Activated B cell treated with CpG ODN at 0.5 μM for 24 hours (primary cell): ENCODE measurements at regions of chr22 and their contacts with region 1.

Region 1: DNA sequence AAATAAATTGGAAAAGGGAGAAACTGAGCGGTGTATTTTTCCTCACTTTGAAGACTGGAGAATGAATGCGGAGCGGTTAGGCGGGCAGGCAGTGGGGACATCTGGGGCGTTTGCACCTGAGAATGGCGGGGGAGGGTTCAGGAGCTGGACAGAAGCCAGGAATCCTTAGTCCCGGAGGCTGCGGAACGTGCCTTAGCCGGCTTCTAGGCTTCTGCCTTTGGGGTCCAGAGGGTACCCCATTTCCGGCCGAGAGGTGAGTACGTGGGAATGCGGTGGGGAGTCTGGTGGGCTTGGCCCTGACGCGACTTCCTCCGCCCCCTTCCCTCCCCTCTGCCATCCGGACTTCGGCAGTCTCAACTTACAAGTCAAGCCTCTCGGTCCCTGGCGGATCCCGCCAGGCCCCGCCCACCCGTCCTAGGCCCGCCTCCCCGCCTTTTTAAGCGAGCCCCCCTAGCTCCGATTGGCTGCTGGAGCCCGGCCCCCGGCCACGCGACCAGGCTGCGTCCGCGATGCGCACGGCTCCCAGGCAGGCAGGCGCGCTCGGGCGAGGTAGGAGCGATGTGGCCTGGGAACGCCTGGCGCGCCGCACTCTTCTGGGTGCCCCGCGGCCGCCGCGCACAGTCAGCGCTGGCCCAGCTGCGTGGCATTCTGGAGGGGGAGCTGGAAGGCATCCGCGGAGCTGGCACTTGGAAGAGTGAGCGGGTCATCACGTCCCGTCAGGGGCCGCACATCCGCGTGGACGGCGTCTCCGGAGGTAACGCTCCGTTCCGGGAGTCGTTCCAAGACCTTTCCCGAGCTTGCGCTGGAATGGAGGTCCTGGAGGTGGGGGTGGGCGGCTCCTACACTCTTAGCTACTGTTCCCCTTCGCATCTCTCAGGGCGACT is at the start of gene GCAT:
- DNase-seq: peak; percentile 73
- ATAC-seq: peak; percentile 98
- H3K4me3 Mint-ChIP-seq: peak within 1 kb of the TSS; percentile 70
- H3K27ac Mint-ChIP-seq: no peak within 1 kb of the TSS
- H3K4me1 Mint-ChIP-seq: peaks cover 43% of the 10 kb centered on the region
- H3K27me3 Mint-ChIP-seq: peaks cover 46% of the 10 kb centered on the region
- CTCF ChIP-seq: no peak
- total RNA-seq, gene GCAT: 0.40 and 0.83 TPM in 2 replicates

Region 2: GRCh38 chr22:37745548-37746365 is 61.9 kb before region 1 on chr22:
- CTCF ChIA-PET with region 1: no interaction called
- POLR2A ChIA-PET with region 1: no interaction called
- intact Hi-C with region 1: loop called (anchors 2 kb)
- DNase-seq: peak; percentile 77
- ATAC-seq: peak; percentile 95
- H3K4me3 Mint-ChIP-seq: peak overlapping the region; percentile 90
- H3K27ac Mint-ChIP-seq: peak overlapping the region; percentile 89
- H3K4me1 Mint-ChIP-seq: peaks cover 22% of the 10 kb centered on the region
- H3K27me3 Mint-ChIP-seq: no peaks in the 10 kb centered on the region
- CTCF ChIP-seq: no peak

Region 3: GRCh38 chr22:37792494-37792893 is 15.2 kb before region 1 on chr22:
- CTCF ChIA-PET with region 1: no interaction called
- POLR2A ChIA-PET with region 1: no interaction called
- intact Hi-C with region 1: no loop called
- DNase-seq: no peak
- ATAC-seq: no peak
- H3K4me3 Mint-ChIP-seq: no peak overlapping the region
- H3K27ac Mint-ChIP-seq: no peak overlapping the region
- H3K4me1 Mint-ChIP-seq: no peaks in the 10 kb centered on the region
- H3K27me3 Mint-ChIP-seq: no peaks in the 10 kb centered on the region
- CTCF ChIP-seq: no peak